ENCODE measurements at regions of chr16 and their contacts with region 1.

Region 1: DNA sequence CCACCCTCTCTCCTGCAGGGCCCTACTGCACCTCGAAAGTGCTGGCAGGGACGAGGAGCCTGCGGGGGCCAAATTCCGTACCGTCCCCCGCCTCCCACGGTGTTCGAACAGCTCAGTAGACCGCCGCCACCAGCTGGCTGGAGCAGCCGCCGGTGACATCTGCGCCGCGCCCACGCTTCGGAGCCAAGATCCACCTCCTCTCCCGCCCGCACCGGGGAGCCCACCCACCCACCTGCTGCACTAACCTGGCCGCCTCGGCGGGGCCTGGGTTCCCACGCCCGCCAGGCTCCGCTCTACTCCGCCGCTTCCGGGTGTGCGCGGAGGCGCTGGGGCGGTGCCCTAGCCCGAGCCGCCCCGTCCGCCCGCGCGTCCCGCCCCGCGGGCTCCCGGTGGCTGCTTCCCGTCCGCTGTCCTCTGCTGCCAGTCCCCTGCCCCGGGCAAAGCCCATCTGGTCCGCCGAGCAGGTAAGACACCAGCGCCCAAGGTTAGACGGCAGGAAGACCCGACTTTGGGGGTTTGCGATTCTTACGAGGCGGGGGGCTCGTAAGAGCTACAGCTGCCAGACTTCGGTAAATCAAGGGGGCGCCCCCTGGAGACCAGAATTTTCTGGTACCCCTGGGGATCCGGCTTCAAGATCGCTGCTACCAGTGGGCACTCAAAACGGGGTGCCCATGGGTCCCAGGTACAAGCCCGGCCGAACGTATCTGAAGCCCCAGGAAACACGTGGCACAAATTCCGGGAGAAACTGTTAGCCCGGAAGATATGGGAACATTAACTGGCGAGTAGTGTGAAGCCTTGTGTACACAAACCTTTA is at the starts of genes FBXL8 and TRADD:
- DNase-seq: peak; percentile 89
- H3K4me3 ChIP-seq: peak within 1 kb of the TSS; percentile 93 to 96
- H3K27ac ChIP-seq: peak within 1 kb of the TSS; percentile 56 to 60
- H3K4me1 ChIP-seq: peaks cover 4 to 30% of the 10 kb centered on the region in 2 experiments; a peak in 1 of 4 replicates
- H3K27me3 ChIP-seq: no peaks in the 10 kb centered on the region
- CTCF ChIP-seq: peak; percentile 74
- EP300 ChIP-seq: no peak; a peak in 1 of 4 replicates
- RAD21 ChIP-seq: no peak
- polyA plus RNA-seq, gene FBXL8: 17.8 and 21.8 TPM in 2 replicates
- polyA plus RNA-seq, gene TRADD: 27.7 and 28.5 TPM in 2 replicates

Region 2: DNA sequence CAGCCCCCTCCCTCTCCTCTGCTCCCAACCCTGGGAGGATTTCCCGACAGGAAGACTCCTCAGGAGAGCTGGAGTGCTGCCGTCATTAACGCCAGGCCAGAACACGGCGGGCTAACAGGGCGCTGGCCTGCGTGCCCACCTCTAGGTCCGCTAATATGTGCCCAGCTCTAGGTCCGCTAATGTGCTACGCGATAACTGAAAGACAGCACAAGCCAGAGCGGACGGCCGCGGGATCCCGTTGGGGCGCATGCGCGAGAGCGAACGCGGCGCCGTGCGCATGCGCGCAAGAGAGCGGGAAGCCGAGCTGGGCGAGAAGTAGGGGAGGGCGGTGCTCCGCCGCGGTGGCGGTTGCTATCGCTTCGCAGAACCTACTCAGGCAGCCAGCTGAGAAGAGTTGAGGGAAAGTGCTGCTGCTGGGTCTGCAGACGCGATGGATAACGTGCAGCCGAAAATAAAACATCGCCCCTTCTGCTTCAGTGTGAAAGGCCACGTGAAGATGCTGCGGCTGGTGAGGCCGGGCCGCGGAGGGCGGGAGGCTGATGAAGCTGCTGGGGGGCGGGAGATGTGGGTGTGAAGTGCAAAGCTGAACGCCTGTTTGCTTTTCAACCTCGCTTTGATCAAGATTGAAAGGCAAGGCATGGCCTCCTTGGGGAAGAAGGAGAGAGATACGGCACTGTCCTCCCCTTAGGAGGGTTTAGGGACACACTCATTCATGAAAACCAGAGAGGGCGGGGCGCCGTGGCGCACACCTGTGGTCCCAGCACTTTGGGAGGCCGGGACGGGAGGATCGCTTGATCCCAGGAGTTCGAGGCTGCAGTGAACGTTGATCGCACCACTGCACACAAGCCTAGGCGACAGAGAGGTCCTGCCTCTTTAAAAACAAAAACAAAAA is 607.3 kb before region 1 on chr16 and contains the start of gene CKLF:
- CTCF ChIA-PET with region 1: no interaction called
- POLR2A ChIA-PET with region 1: no interaction called
- DNase-seq: peak; percentile 96
- H3K4me3 ChIP-seq: peak within 1 kb of the TSS; percentile 71 to 78
- H3K27ac ChIP-seq: peak within 1 kb of the TSS; percentile 78 to 96
- H3K4me1 ChIP-seq: peaks cover 19 to 27% of the 10 kb centered on the region in 2 experiments; a peak in 3 of 4 replicates
- H3K27me3 ChIP-seq: no peaks in the 10 kb centered on the region
- CTCF ChIP-seq: no peak
- EP300 ChIP-seq: no peak
- RAD21 ChIP-seq: no peak; the same call in 1 of the 2 replicates
- polyA plus RNA-seq, gene CKLF: 179 and 211 TPM in 2 replicates

Region 3: GRCh38 chr16:66858740-66859396 is 300.9 kb before region 1 on chr16:
- CTCF ChIA-PET with region 1: no interaction called
- POLR2A ChIA-PET with region 1: no interaction called
- DNase-seq: peak; percentile 19
- H3K4me3 ChIP-seq: no peak overlapping the region
- H3K27ac ChIP-seq: no peak overlapping the region; a peak in 1 of 4 replicates
- H3K4me1 ChIP-seq: peaks cover 7 to 12% of the 10 kb centered on the region in 2 experiments; a peak in 2 of 4 replicates
- H3K27me3 ChIP-seq: no peaks in the 10 kb centered on the region
- CTCF ChIP-seq: no peak
- EP300 ChIP-seq: no peak
- RAD21 ChIP-seq: no peak

Region 4: DNA sequence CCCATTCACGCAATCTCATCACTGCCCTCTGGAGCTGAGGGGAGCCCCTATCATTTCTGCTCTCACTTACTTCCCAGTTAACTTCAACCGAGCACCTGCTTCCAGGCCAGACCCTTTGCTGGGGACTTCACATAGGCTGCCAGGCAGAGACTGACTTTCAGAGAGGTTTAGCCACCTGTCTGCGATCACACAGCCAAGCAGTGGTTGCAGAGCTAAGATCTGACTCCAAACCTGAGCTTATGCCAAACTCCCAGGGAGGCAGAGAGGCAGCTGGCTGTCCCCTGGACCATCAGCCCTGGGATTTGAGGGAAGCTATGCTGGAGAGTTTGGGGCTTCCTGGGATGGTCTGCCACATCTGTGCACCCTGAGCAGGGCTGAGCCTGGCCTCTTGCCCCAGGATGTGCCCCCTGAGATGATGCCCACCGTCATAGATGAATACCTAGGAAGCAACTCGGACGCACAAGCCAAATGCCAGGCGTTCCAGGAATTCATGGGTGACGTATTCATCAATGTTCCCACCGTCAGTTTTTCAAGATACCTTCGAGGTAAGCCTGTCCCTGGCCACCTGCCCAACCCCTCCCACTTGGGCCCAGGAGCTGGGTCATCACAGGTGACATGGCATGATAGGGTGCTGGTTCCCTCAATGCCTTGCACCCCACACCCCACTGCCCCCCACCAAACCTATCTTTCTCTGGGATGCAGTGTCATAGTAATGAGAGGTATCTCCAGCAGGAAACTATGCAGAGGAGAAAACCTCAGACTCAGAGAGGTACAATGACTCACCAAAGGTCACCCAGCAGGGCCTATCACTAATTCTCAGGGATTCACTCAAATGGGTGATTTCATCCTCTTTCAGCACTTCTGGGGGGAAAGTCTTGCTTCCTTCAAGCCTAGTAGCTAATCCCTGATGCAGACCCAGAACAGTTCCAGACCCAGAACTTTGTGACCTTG is 188.8 kb before region 1 on chr16:
- CTCF ChIA-PET with region 1: interaction called, 103 read pairs
- POLR2A ChIA-PET with region 1: no interaction called
- DNase-seq: no peak
- H3K4me3 ChIP-seq: no peak overlapping the region
- H3K27ac ChIP-seq: no peak overlapping the region
- H3K4me1 ChIP-seq: no peaks in the 10 kb centered on the region
- H3K27me3 ChIP-seq: no peaks in the 10 kb centered on the region
- CTCF ChIP-seq: no peak
- EP300 ChIP-seq: no peak
- RAD21 ChIP-seq: no peak

Region 5: GRCh38 chr16:67000384-67001351 is 159.1 kb before region 1 on chr16:
- CTCF ChIA-PET with region 1: interaction called, 16 read pairs
- POLR2A ChIA-PET with region 1: no interaction called
- DNase-seq: peak; percentile 97
- H3K4me3 ChIP-seq: peak overlapping the region; percentile 51 to 58
- H3K27ac ChIP-seq: no peak overlapping the region; a peak in 1 of 4 replicates
- H3K4me1 ChIP-seq: peaks cover 0 to 13% of the 10 kb centered on the region in 2 experiments; a peak in 1 of 4 replicates
- H3K27me3 ChIP-seq: no peaks in the 10 kb centered on the region
- CTCF ChIP-seq: no peak
- EP300 ChIP-seq: no peak
- RAD21 ChIP-seq: no peak

Region 6: GRCh38 chr16:67109407-67110135 is 50.2 kb before region 1 on chr16 and contains the start of gene PHAF1:
- CTCF ChIA-PET with region 1: interaction called, 16 read pairs
- POLR2A ChIA-PET with region 1: interaction called, 3 read pairs
- DNase-seq: peak; percentile 100
- H3K4me3 ChIP-seq: peak within 1 kb of the TSS; percentile 84 to 97
- H3K27ac ChIP-seq: peak within 1 kb of the TSS; percentile 38 to 75; a peak in 3 of 4 replicates
- H3K4me1 ChIP-seq: peaks cover 10 to 23% of the 10 kb centered on the region in 2 experiments; a peak in 1 of 4 replicates
- H3K27me3 ChIP-seq: no peaks in the 10 kb centered on the region
- CTCF ChIP-seq: no peak
- EP300 ChIP-seq: peak in 1 of 2 experiments; percentile 36; a peak in 1 of 4 replicates
- RAD21 ChIP-seq: no peak
- polyA plus RNA-seq, gene PHAF1: 17.3 and 22.6 TPM in 2 replicates

Region 7: DNA sequence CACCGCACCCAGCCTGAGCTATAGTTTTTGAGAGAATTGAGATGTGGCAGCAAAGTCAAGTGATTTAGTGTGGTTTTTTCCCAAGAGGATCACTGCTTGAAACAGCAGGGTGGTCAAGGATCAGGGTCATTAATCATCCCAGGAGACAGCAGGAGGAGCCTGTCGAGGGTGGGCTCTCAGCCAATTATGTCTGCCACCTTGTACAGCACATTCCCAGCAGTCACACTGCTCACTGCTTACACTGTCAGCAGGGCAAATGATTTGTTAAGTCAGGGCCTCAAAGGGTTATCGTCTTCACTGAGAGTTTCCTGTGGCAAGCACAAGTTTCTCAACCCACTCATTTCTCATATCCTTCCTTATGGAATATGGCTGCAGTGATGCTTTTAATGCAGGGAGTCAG is 22.2 kb before region 1 on chr16:
- CTCF ChIA-PET with region 1: interaction called, 50 read pairs
- POLR2A ChIA-PET with region 1: no interaction called
- DNase-seq: no peak
- H3K4me3 ChIP-seq: no peak overlapping the region
- H3K27ac ChIP-seq: no peak overlapping the region
- H3K4me1 ChIP-seq: no peaks in the 10 kb centered on the region
- H3K27me3 ChIP-seq: no peaks in the 10 kb centered on the region
- CTCF ChIP-seq: no peak
- EP300 ChIP-seq: no peak
- RAD21 ChIP-seq: no peak

Region 8: DNA sequence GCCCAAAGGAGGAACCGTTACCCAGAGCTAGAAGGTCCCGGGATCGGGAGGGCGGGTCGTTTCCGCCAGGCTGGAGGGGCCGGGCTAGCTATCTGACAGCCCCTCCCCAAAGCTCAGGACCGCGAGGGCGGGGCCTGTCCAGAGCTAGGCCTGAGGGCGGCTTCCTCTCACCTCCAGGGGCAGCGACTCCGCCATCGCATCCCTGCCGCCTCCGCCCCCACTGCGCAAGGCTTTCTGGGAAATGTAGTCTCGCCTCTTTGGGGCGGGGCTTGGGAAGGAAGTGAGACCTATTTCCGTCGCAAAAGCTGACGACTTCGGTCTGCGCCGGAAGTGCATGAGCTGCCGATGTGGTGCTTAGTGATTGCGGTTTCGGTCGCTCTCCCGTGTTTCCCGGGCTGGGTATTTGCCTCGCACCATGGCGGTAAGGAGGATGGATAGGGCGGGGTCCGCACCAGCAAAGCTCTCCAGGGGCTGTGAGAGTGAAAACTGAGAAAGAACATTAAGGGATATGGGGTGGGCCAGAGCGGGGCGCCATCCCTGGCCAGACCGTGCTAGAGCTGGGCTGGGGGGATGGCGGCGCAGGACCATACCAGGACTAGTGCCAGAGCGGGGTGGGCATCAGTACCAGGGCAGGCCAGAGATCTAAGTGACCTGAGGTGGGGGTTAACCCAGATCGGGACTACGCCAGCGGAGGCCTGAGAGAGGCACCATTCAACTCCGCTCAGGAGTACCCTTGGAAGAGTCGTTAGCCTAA is 67.2 kb after region 1 on chr16 and contains the start of gene TMEM208:
- CTCF ChIA-PET with region 1: interaction called, 10 read pairs
- POLR2A ChIA-PET with region 1: no interaction called
- DNase-seq: peak; percentile 97
- H3K4me3 ChIP-seq: peak within 1 kb of the TSS; percentile 92 to 100
- H3K27ac ChIP-seq: peak within 1 kb of the TSS; percentile 72 to 83
- H3K4me1 ChIP-seq: peaks cover 0 to 22% of the 10 kb centered on the region in 2 experiments; a peak in 2 of 4 replicates
- H3K27me3 ChIP-seq: no peaks in the 10 kb centered on the region
- CTCF ChIP-seq: peak; percentile 48
- EP300 ChIP-seq: no peak
- RAD21 ChIP-seq: no peak
- polyA plus RNA-seq, gene TMEM208: 98.2 and 130 TPM in 2 replicates

Measured in SK-N-SH (cell line).